PC-3 (cell line): ENCODE measurements at regions of chr3 and their contacts with region 1.

Region 1: DNA sequence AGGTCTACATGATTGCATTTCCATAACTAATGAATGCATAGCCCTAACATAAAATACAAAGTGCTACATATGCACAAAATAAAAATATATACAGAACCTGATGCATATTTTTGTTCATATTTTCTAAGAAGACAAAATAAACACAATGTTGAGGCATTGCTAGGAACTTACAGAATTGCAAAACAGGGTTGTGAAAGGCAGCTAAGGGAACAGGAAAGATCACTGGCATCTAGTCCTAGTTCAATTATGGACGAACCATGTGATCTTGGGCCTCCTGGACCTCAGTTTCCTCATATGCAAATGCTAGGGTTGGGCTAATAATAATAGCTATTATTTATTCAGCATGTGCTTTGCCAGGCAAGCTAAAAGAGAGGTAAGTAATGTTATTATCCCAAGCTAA is 15.5 kb upstream of the NCEH1 start:
- DNase-seq: no peak
- ATAC-seq: no peak
- H3K4me3 ChIP-seq: no peak overlapping the region
- H3K27ac ChIP-seq: no peak overlapping the region
- H3K4me1 ChIP-seq: peaks cover 15% of the 10 kb centered on the region
- H3K27me3 ChIP-seq: no peaks in the 10 kb centered on the region
- CTCF ChIP-seq: no peak

Region 2: GRCh38 chr3:172280406-172281051 is 445.9 kb before region 1 on chr3:
- CTCF ChIA-PET with region 1: no interaction called
- POLR2A ChIA-PET with region 1: no interaction called
- intact Hi-C with region 1: no loop called
- DNase-seq: no peak
- ATAC-seq: no peak; the same call in 1 of the 2 replicates
- H3K4me3 ChIP-seq: no peak overlapping the region
- H3K27ac ChIP-seq: no peak overlapping the region
- H3K4me1 ChIP-seq: 0 out of 2 replicates have a peak, but pooled peaks cover 3% of the 10 kb centered on the region
- H3K27me3 ChIP-seq: no peaks in the 10 kb centered on the region
- CTCF ChIP-seq: no peak

Region 3: GRCh38 chr3:172739462-172739861 is 13.1 kb after region 1 on chr3:
- CTCF ChIA-PET with region 1: no interaction called
- POLR2A ChIA-PET with region 1: interaction called, 17 read pairs
- intact Hi-C with region 1: no loop called
- DNase-seq: no peak
- ATAC-seq: no peak
- H3K4me3 ChIP-seq: no peak overlapping the region
- H3K27ac ChIP-seq: no peak overlapping the region
- H3K4me1 ChIP-seq: no peaks in the 10 kb centered on the region
- H3K27me3 ChIP-seq: no peaks in the 10 kb centered on the region
- CTCF ChIP-seq: no peak

Region 4: DNA sequence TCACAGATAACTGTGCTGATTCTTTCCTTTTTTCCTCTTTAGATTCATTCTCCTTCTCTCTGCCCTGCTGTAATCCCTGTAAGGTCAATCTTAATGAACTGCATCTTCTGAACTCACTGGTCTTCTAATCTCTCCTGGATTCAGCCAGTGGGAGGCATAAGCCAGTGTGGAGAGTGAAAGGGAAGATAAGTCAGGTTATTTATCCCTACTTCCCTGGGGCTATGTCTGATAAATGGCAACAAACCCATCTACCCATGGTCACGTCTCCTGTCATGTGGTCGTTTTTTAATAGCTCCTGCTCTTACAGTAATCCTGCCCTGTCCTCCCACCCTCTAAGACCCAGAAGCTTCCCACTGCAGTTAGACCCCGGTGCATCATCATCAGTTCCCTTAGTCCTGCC is 1933.1 kb after region 1 on chr3:
- CTCF ChIA-PET with region 1: no interaction called
- POLR2A ChIA-PET with region 1: no interaction called
- intact Hi-C with region 1: no loop called
- DNase-seq: no peak
- ATAC-seq: no peak
- H3K4me3 ChIP-seq: no peak overlapping the region
- H3K27ac ChIP-seq: no peak overlapping the region
- H3K4me1 ChIP-seq: no peaks in the 10 kb centered on the region
- H3K27me3 ChIP-seq: no peaks in the 10 kb centered on the region
- CTCF ChIP-seq: no peak